CD8-positive, alpha-beta T cell (primary cell): ENCODE measurements at regions of chr1 and their contacts with region 1.

Region 1: GRCh38 chr1:40373338-40374283 is at the start of gene SMAP2:
- DNase-seq: peak; percentile 91 to 98 (median 95)
- ATAC-seq: peak; percentile 80
- H3K4me3 ChIP-seq: peak within 1 kb of the TSS; percentile 81 to 100
- H3K4me3 Mint-ChIP-seq: peak within 1 kb of the TSS; percentile 100
- H3K27ac ChIP-seq: peak within 1 kb of the TSS; percentile 96 to 97
- H3K27ac Mint-ChIP-seq: peak within 1 kb of the TSS; percentile 99
- H3K4me1 ChIP-seq: peaks cover 35% of the 10 kb centered on the region
- H3K4me1 Mint-ChIP-seq: peaks cover 54% of the 10 kb centered on the region
- H3K27me3 ChIP-seq: no peaks in the 10 kb centered on the region
- H3K27me3 Mint-ChIP-seq: no peaks in the 10 kb centered on the region
- CTCF ChIP-seq: no peak
- total RNA-seq, gene SMAP2: 167 to 171 TPM

Region 2: GRCh38 chr1:40185951-40186864 is 187.4 kb before region 1 on chr1:
- CTCF ChIA-PET with region 1: no interaction called
- POLR2A ChIA-PET with region 1: no interaction called
- intact Hi-C with region 1: no loop called
- DNase-seq: peak in 5 of 9 experiments; percentile 11 to 54 (median 36)
- ATAC-seq: peak; percentile 78
- H3K4me3 ChIP-seq: no peak overlapping the region
- H3K4me3 Mint-ChIP-seq: no peak overlapping the region
- H3K27ac ChIP-seq: no peak overlapping the region
- H3K27ac Mint-ChIP-seq: peak overlapping the region; percentile 66
- H3K4me1 ChIP-seq: peaks cover 18% of the 10 kb centered on the region
- H3K4me1 Mint-ChIP-seq: peaks cover 55% of the 10 kb centered on the region
- H3K27me3 ChIP-seq: no peaks in the 10 kb centered on the region
- H3K27me3 Mint-ChIP-seq: no peaks in the 10 kb centered on the region
- CTCF ChIP-seq: no peak

Region 3: GRCh38 chr1:40257688-40258444 is 115.7 kb before region 1 on chr1 and contains the start of gene ZMPSTE24:
- CTCF ChIA-PET with region 1: no interaction called
- POLR2A ChIA-PET with region 1: interaction called, 4 read pairs
- intact Hi-C with region 1: loop called in 1 of 2 experiments (anchors 5 kb)
- DNase-seq: peak; percentile 92 to 99 (median 95)
- ATAC-seq: peak; percentile 95
- H3K4me3 ChIP-seq: peak within 1 kb of the TSS; percentile 95 to 98
- H3K4me3 Mint-ChIP-seq: peak within 1 kb of the TSS; percentile 98
- H3K27ac ChIP-seq: peak within 1 kb of the TSS; percentile 88 to 99
- H3K27ac Mint-ChIP-seq: peak within 1 kb of the TSS; percentile 100
- H3K4me1 ChIP-seq: peaks cover 20% of the 10 kb centered on the region
- H3K4me1 Mint-ChIP-seq: peaks cover 56% of the 10 kb centered on the region
- H3K27me3 ChIP-seq: no peaks in the 10 kb centered on the region
- H3K27me3 Mint-ChIP-seq: no peaks in the 10 kb centered on the region
- CTCF ChIP-seq: no peak
- total RNA-seq, gene ZMPSTE24: 11.5 to 12.2 TPM

Region 4: GRCh38 chr1:40392221-40392620 is 18.6 kb after region 1 on chr1:
- CTCF ChIA-PET with region 1: interaction called, 4 read pairs
- POLR2A ChIA-PET with region 1: interaction called, 98 read pairs
- intact Hi-C with region 1: no loop called
- DNase-seq: no peak
- ATAC-seq: no peak
- H3K4me3 ChIP-seq: no peak overlapping the region
- H3K4me3 Mint-ChIP-seq: peak overlapping the region; percentile 67
- H3K27ac ChIP-seq: peak overlapping the region; percentile 26 to 83
- H3K27ac Mint-ChIP-seq: peak overlapping the region; percentile 93
- H3K4me1 ChIP-seq: peaks cover 86% of the 10 kb centered on the region
- H3K4me1 Mint-ChIP-seq: peaks cover 94% of the 10 kb centered on the region
- H3K27me3 ChIP-seq: no peaks in the 10 kb centered on the region
- H3K27me3 Mint-ChIP-seq: no peaks in the 10 kb centered on the region
- CTCF ChIP-seq: no peak